Natural killer cell (primary cell): ENCODE measurements at regions of chr10 and their contacts with region 1.

Region 1: DNA sequence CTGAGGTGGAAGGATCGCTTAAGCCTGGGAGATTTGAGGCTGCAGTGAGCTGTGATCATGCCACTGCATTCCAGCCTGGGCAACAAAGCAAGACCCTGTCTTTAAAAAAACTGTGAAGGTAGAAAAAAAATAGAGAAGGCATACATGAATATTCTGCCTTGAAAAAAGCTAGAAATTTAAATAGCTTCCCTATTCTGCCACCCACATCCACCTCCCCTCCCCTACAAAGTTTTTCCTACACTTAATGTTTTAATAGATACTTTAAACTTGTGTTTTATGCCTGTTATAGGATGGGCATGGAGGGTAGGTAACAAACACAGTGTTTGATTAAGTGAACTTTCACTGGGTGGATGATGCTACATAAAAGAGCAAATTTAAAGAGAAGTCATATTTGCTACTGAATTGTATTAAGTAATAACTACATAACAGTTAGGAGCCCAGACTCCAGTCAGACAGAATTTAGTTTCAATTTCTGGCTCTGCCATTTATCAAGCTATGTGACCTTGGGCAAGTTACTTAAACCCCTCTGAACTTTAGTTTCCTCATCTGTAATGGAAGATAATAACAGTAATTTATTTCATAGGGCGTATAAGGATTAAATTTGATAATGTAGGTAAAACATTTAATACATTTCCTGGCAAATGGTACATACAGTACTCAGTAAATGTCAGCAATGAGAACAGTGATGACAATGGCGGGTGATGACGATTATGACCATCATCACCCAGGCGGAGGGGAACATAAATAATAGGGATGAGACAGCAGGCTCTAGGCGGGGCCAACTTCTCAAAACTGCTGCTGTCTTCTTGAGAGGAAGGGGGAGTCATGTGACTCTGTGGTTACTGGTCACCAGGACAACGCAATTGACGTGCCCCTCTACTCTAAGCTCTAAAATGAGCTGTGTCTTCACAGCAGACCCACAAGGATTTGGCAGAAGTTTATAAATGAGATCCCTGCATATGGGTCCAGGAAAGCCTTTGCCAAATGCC is 15.8 kb downstream of the DNMBP start:
- DNase-seq: peak; percentile 50 to 72
- ATAC-seq: peak; percentile 91 to 93 (median 92)
- H3K4me3 ChIP-seq: no peak overlapping the region
- H3K4me3 Mint-ChIP-seq: peak overlapping the region; percentile 79
- H3K27ac ChIP-seq: peak overlapping the region; percentile 76
- H3K27ac Mint-ChIP-seq: peak overlapping the region; percentile 83 to 91
- H3K4me1 ChIP-seq: peaks cover 14% of the 10 kb centered on the region
- H3K4me1 Mint-ChIP-seq: peaks cover 33 to 35% of the 10 kb centered on the region in 2 donors
- H3K27me3 ChIP-seq: no peaks in the 10 kb centered on the region
- H3K27me3 Mint-ChIP-seq: no peaks in the 10 kb centered on the region
- CTCF ChIP-seq: no peak

Region 2: DNA sequence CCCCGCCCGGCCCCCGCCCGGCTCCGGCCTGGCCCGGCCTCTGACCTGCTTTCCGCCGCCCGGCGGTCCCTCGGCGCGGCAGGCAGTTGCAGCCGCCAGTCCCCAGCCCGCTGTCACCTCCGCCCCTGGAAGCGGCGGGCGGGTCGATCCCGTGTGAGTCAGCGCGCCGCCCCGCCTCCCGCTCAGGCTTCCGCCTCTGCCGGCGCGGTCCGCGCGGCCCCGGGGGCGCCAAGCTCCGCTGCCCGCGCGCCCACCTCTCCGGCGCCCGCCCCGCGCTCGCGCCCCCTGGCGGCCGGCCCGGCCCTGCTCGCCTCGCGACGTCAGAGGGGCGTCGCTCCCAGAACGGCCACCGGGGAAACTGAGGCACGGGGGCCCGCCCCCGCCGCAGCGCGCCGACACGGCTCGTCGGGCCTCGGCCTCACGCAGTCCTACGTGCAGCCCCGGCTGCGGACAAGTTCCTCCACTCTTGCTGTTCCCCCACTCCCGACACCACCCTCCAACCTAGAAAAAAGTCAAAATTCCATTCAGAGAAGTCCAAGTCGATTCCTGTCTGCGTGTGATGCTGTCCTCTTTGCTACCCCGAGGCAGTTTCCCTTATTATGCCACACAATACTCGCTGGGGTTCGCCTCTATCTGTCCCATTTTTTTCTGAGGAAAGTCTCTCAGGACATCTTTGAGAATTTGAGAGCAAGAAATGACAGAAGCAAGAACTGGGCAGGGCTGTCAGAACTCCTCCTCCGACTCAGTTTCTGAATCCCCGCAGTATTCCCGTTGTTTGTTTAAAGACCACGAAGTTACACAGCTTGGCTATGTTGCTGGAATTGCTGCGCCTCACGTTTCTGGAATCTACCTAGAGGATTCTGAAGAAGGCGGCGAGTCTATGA is 16.0 kb after region 1 on chr10 and contains the start of gene DNMBP:
- intact Hi-C with region 1: loop called (anchors 1 kb)
- DNase-seq: peak; percentile 86 to 91
- ATAC-seq: peak; percentile 96 to 98 (median 97)
- H3K4me3 ChIP-seq: peak within 1 kb of the TSS; percentile 83
- H3K4me3 Mint-ChIP-seq: peak within 1 kb of the TSS; percentile 93
- H3K27ac ChIP-seq: peak within 1 kb of the TSS; percentile 67
- H3K27ac Mint-ChIP-seq: peak within 1 kb of the TSS; percentile 41 to 89
- H3K4me1 ChIP-seq: peaks cover 11% of the 10 kb centered on the region
- H3K4me1 Mint-ChIP-seq: peaks cover 36 to 41% of the 10 kb centered on the region in 2 donors
- H3K27me3 ChIP-seq: no peaks in the 10 kb centered on the region
- H3K27me3 Mint-ChIP-seq: no peaks in the 10 kb centered on the region
- CTCF ChIP-seq: peak; percentile 59
- total RNA-seq, gene DNMBP: 13.8 to 15.4 (median 14.4) TPM